Activated B cell treated with CpG ODN at 0.5 μM for 24 hours (primary cell): ENCODE measurements at regions of chr3 and their contacts with region 1.

Region 1: GRCh38 chr3:102536456-102536855 is 101.6 kb downstream of the ZPLD1 start:
- DNase-seq: no peak
- ATAC-seq: peak; percentile 57
- H3K4me3 Mint-ChIP-seq: no peak overlapping the region
- H3K27ac Mint-ChIP-seq: no peak overlapping the region
- H3K4me1 Mint-ChIP-seq: no peaks in the 10 kb centered on the region
- H3K27me3 Mint-ChIP-seq: peaks cover 24% of the 10 kb centered on the region
- CTCF ChIP-seq: no peak

Region 2: GRCh38 chr3:101695779-101696372 is 840.6 kb before region 1 on chr3:
- CTCF ChIA-PET with region 1: no interaction called
- POLR2A ChIA-PET with region 1: no interaction called
- intact Hi-C with region 1: loop called (anchors 1 kb)
- DNase-seq: no peak
- ATAC-seq: no peak
- H3K4me3 Mint-ChIP-seq: no peak overlapping the region
- H3K27ac Mint-ChIP-seq: no peak overlapping the region
- H3K4me1 Mint-ChIP-seq: peaks cover 3% of the 10 kb centered on the region
- H3K27me3 Mint-ChIP-seq: no peaks in the 10 kb centered on the region
- CTCF ChIP-seq: peak; percentile 67

Region 3: GRCh38 chr3:101803173-101803782 is 733.2 kb before region 1 on chr3:
- CTCF ChIA-PET with region 1: interaction called, 23 read pairs
- POLR2A ChIA-PET with region 1: no interaction called
- intact Hi-C with region 1: loop called (anchors 1 kb)
- DNase-seq: no peak
- ATAC-seq: peak; percentile 100
- H3K4me3 Mint-ChIP-seq: no peak overlapping the region
- H3K27ac Mint-ChIP-seq: no peak overlapping the region
- H3K4me1 Mint-ChIP-seq: peaks cover 7% of the 10 kb centered on the region
- H3K27me3 Mint-ChIP-seq: no peaks in the 10 kb centered on the region
- CTCF ChIP-seq: no peak

Region 4: GRCh38 chr3:101809178-101810021 is 727.1 kb before region 1 on chr3:
- CTCF ChIA-PET with region 1: interaction called, 19 read pairs
- POLR2A ChIA-PET with region 1: interaction called, 3 read pairs
- intact Hi-C with region 1: loop called (anchors 1 kb)
- DNase-seq: no peak
- ATAC-seq: peak; percentile 82
- H3K4me3 Mint-ChIP-seq: no peak overlapping the region
- H3K27ac Mint-ChIP-seq: no peak overlapping the region
- H3K4me1 Mint-ChIP-seq: peaks cover 37% of the 10 kb centered on the region
- H3K27me3 Mint-ChIP-seq: no peaks in the 10 kb centered on the region
- CTCF ChIP-seq: peak; percentile 59

Region 5: GRCh38 chr3:102235679-102236078 is 300.8 kb before region 1 on chr3:
- CTCF ChIA-PET with region 1: interaction called, 198 read pairs
- POLR2A ChIA-PET with region 1: no interaction called
- intact Hi-C with region 1: loop called (anchors 1 kb)
- DNase-seq: no peak
- ATAC-seq: no peak
- H3K4me3 Mint-ChIP-seq: no peak overlapping the region
- H3K27ac Mint-ChIP-seq: no peak overlapping the region
- H3K4me1 Mint-ChIP-seq: peaks cover 46% of the 10 kb centered on the region
- H3K27me3 Mint-ChIP-seq: no peaks in the 10 kb centered on the region
- CTCF ChIP-seq: peak; percentile 51